ENCODE measurements at regions of chr17 and their contacts with region 1.

Region 1: GRCh38 chr17:76000016-76000754 is 470 bp upstream of the CDK3 start:
- DNase-seq: peak; percentile 27 to 76 (median 56)
- ATAC-seq: peak; percentile 77
- H3K4me3 ChIP-seq: no peak overlapping the region
- H3K4me3 Mint-ChIP-seq: no peak overlapping the region
- H3K27ac ChIP-seq: no peak overlapping the region
- H3K27ac Mint-ChIP-seq: peak overlapping the region in 1 of 9 donors; percentile 43
- H3K4me1 ChIP-seq: peaks cover 9 to 12% of the 10 kb centered on the region in 2 donors
- H3K4me1 Mint-ChIP-seq: peaks cover 14 to 25% (median 14%) of the 10 kb centered on the region in 7 donors
- H3K27me3 ChIP-seq: no peaks in the 10 kb centered on the region
- H3K27me3 Mint-ChIP-seq: no peaks in the 10 kb centered on the region

Region 2: GRCh38 chr17:75012346-75013091 is 987.7 kb before region 1 on chr17 and contains the start of gene MRPL58:
- CTCF ChIA-PET with region 1: no interaction called
- POLR2A ChIA-PET with region 1: no interaction called
- intact Hi-C with region 1: no loop called
- DNase-seq: peak; percentile 66 to 81 (median 75)
- ATAC-seq: peak; percentile 97
- H3K4me3 ChIP-seq: peak within 1 kb of the TSS; percentile 69
- H3K4me3 Mint-ChIP-seq: peak within 1 kb of the TSS; percentile 76 to 98 (median 94)
- H3K27ac ChIP-seq: peak within 1 kb of the TSS; percentile 83
- H3K27ac Mint-ChIP-seq: peak within 1 kb of the TSS; percentile 5 to 97 (median 92)
- H3K4me1 ChIP-seq: peaks cover 9 to 14% of the 10 kb centered on the region in 2 donors
- H3K4me1 Mint-ChIP-seq: peaks cover 25 to 38% (median 35%) of the 10 kb centered on the region in 7 donors
- H3K27me3 ChIP-seq: no peaks in the 10 kb centered on the region
- H3K27me3 Mint-ChIP-seq: peaks cover 0 to 4% (median 0%) of the 10 kb centered on the region in 5 donors
- total RNA-seq, gene MRPL58: 11.7 to 46.1 (median 23.0) TPM

Region 3: GRCh38 chr17:76296186-76296585 is 296.0 kb after region 1 on chr17:
- CTCF ChIA-PET with region 1: interaction called, 6 read pairs
- POLR2A ChIA-PET with region 1: no interaction called
- intact Hi-C with region 1: loop called in 1 of 2 experiments (anchors 1 kb)
- DNase-seq: no peak
- ATAC-seq: no peak
- H3K4me3 ChIP-seq: no peak overlapping the region
- H3K4me3 Mint-ChIP-seq: no peak overlapping the region
- H3K27ac ChIP-seq: no peak overlapping the region
- H3K27ac Mint-ChIP-seq: no peak overlapping the region
- H3K4me1 ChIP-seq: peaks cover 0 to 4% of the 10 kb centered on the region in 2 donors
- H3K4me1 Mint-ChIP-seq: peaks cover 0 to 4% (median 3%) of the 10 kb centered on the region in 7 donors
- H3K27me3 ChIP-seq: no peaks in the 10 kb centered on the region
- H3K27me3 Mint-ChIP-seq: no peaks in the 10 kb centered on the region